Activated CD4-positive, alpha-beta T cell treated with anti-CD3 and anti-CD28 coated beads, Interleukin-2, amount 10 ng/mL, durations not matched to agents 24 days and 14 days (primary cell): ENCODE measurements at regions of chr20 and their contacts with region 1.

Region 1: GRCh38 chr20:63980806-63981728 is at the start of gene PRPF6:
- DNase-seq: peak; percentile 99
- H3K4me3 Mint-ChIP-seq: peak within 1 kb of the TSS; percentile 99
- H3K27ac Mint-ChIP-seq: peak within 1 kb of the TSS; percentile 100
- H3K4me1 Mint-ChIP-seq: peaks cover 58% of the 10 kb centered on the region
- H3K27me3 Mint-ChIP-seq: no peaks in the 10 kb centered on the region
- total RNA-seq, gene PRPF6: 79.5 and 81.3 TPM in 2 replicates

Region 2: GRCh38 chr20:63627129-63627750 is 353.8 kb before region 1 on chr20:
- intact Hi-C with region 1: loop called (anchors 2 kb)
- DNase-seq: peak; percentile 98
- H3K4me3 Mint-ChIP-seq: peak overlapping the region; percentile 97
- H3K27ac Mint-ChIP-seq: peak overlapping the region; percentile 99
- H3K4me1 Mint-ChIP-seq: peaks cover 20% of the 10 kb centered on the region
- H3K27me3 Mint-ChIP-seq: no peaks in the 10 kb centered on the region

Region 3: DNA sequence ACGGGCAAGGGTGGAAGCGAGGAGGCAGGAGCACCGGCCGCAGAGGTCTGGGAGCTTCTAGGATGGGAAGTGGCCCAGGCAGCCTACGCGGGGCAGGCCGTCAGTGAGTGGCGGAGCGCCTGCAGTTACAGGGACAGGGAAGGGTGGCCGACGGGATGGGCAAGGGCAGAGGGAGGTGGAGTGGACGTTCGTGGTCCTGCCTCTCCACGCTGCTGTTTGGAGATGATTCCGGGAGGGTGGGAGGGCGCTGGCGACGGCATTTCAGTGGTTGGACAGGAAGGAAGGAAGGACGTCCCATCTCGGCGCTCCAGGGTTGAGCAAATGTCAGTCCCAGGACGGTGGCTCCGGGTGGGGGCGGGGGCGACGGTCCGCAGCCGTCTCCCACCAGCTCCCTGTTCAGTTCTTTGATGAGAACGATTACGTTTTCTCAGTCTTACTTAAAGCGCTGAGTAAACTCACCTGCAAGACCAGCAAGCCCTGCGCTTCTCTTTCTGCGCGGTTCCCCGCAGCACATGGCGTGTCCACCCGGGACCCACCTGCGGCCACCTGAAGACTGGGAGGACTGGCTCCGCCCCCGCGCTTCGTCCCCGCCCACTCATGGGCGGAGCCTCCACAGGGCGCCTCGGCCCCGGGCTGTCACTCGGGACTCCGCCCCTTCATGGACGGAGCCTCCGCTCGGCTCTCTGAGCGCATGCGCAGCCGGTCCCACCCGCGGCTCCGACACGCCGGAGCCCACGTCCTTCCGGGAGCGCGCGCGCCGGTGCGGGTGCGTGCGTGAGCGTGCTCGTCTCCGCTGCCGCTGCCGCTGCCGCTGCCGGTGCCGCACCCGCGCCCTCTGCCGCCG is 86.5 kb before region 1 on chr20 and contains the start of gene DNAJC5:
- intact Hi-C with region 1: loop called (anchors 2 kb)
- DNase-seq: peak; percentile 100
- H3K4me3 Mint-ChIP-seq: peak within 1 kb of the TSS; percentile 90
- H3K27ac Mint-ChIP-seq: peak within 1 kb of the TSS; percentile 94
- H3K4me1 Mint-ChIP-seq: peaks cover 35% of the 10 kb centered on the region
- H3K27me3 Mint-ChIP-seq: peaks cover 3% of the 10 kb centered on the region
- total RNA-seq, gene DNAJC5: 42.3 and 43.1 TPM in 2 replicates

Region 4: GRCh38 chr20:64038565-64039292 is 57.7 kb after region 1 on chr20:
- intact Hi-C with region 1: loop called (anchors 1 kb)
- DNase-seq: peak; percentile 95
- H3K4me3 Mint-ChIP-seq: peak overlapping the region; percentile 79
- H3K27ac Mint-ChIP-seq: peak overlapping the region; percentile 80
- H3K4me1 Mint-ChIP-seq: peaks cover 48% of the 10 kb centered on the region
- H3K27me3 Mint-ChIP-seq: no peaks in the 10 kb centered on the region

Region 5: GRCh38 chr20:64119681-64120341 is 138.7 kb after region 1 on chr20:
- intact Hi-C with region 1: loop called (anchors 5 kb)
- DNase-seq: no peak
- H3K4me3 Mint-ChIP-seq: peak overlapping the region; percentile 77
- H3K27ac Mint-ChIP-seq: peak overlapping the region; percentile 80
- H3K4me1 Mint-ChIP-seq: peaks cover 9% of the 10 kb centered on the region
- H3K27me3 Mint-ChIP-seq: peaks cover 14% of the 10 kb centered on the region